ENCODE measurements at regions of chr3 and their contacts with region 1.

Region 1: GRCh38 chr3:108489771-108490170 is 20.6 kb downstream of the MYH15 start:
- DNase-seq: peak; percentile 39
- ATAC-seq: peak; percentile 80
- H3K4me3 ChIP-seq: no peak overlapping the region
- H3K27ac ChIP-seq: no peak overlapping the region
- H3K4me1 ChIP-seq: no peaks in the 10 kb centered on the region
- H3K27me3 ChIP-seq: peaks cover 0 to 3% of the 10 kb centered on the region in 2 experiments; a peak in 1 of 5 replicates
- CTCF ChIP-seq: peak; percentile 76
- EP300 ChIP-seq: no peak
- POLR2A ChIP-seq: no peak
- RAD21 ChIP-seq: 0 out of 2 replicates have a peak, but pooled peaks have one; percentile 39

Region 2: DNA sequence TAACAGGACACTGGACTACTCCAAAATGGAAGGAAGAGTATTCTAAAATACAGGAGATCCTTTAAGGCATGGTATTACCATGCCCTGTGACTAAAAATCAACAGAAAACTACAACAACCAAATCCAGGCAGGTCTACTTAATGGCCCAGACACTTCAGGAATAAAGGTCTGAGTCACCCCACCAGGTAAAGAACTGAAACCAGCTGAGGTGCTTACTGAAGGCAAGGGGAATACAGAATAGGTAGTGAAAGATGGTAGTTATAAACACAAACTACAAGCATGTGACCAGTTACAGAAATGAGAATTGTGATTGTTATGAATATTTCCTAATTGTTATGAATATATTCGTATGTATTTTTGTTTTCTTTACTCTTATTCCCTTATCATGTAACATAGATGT is 280.9 kb before region 1 on chr3:
- CTCF ChIA-PET with region 1: no interaction called
- POLR2A ChIA-PET with region 1: no interaction called
- in situ Hi-C with region 1: no loop called
- intact Hi-C with region 1: no loop called
- DNase-seq: no peak
- ATAC-seq: no peak
- H3K4me3 ChIP-seq: no peak overlapping the region
- H3K27ac ChIP-seq: no peak overlapping the region
- H3K4me1 ChIP-seq: no peaks in the 10 kb centered on the region
- H3K27me3 ChIP-seq: no peaks in the 10 kb centered on the region; a peak in 1 of 5 replicates
- CTCF ChIP-seq: no peak
- EP300 ChIP-seq: no peak
- POLR2A ChIP-seq: no peak
- RAD21 ChIP-seq: no peak

Region 3: GRCh38 chr3:108453565-108453964 is 36.2 kb before region 1 on chr3:
- CTCF ChIA-PET with region 1: no interaction called
- POLR2A ChIA-PET with region 1: no interaction called
- in situ Hi-C with region 1: no loop called
- intact Hi-C with region 1: no loop called
- DNase-seq: no peak
- ATAC-seq: no peak
- H3K4me3 ChIP-seq: no peak overlapping the region
- H3K27ac ChIP-seq: no peak overlapping the region
- H3K4me1 ChIP-seq: no peaks in the 10 kb centered on the region
- H3K27me3 ChIP-seq: no peaks in the 10 kb centered on the region
- CTCF ChIP-seq: no peak
- EP300 ChIP-seq: no peak
- POLR2A ChIP-seq: no peak
- RAD21 ChIP-seq: no peak

Region 4: DNA sequence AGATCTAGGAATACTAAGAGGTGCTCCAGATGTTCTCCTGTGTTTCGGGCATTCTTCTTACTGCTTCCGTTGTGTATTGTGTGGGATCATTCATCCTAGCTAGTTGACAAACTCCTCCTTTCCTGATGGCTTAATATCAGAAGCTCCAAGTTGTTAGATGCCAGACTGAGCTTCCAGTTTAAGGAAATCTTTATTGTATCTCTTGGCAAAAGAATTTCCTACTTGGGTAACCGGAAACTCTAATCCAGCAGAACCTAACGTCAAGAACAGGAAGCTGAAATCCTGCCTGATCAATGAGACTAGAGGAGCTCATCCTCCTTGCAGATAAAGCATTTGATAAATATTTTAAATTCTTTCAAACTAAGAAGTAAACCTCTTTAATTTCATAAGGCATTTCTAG is 48.3 kb after region 1 on chr3:
- CTCF ChIA-PET with region 1: no interaction called
- POLR2A ChIA-PET with region 1: no interaction called
- in situ Hi-C with region 1: no loop called
- intact Hi-C with region 1: no loop called
- DNase-seq: no peak
- ATAC-seq: no peak
- H3K4me3 ChIP-seq: no peak overlapping the region
- H3K27ac ChIP-seq: no peak overlapping the region
- H3K4me1 ChIP-seq: no peaks in the 10 kb centered on the region
- H3K27me3 ChIP-seq: no peaks in the 10 kb centered on the region; a peak in 1 of 5 replicates
- CTCF ChIP-seq: no peak
- EP300 ChIP-seq: no peak
- POLR2A ChIP-seq: no peak
- RAD21 ChIP-seq: no peak

Region 5: GRCh38 chr3:108552267-108553159 is 62.7 kb after region 1 on chr3:
- CTCF ChIA-PET with region 1: interaction called, 47 read pairs
- POLR2A ChIA-PET with region 1: no interaction called
- in situ Hi-C with region 1: loop called (anchors 5 kb)
- intact Hi-C with region 1: loop called (anchors 1 kb)
- DNase-seq: peak; percentile 35
- ATAC-seq: peak; percentile 44; the same call in 2 of the 3 replicates
- H3K4me3 ChIP-seq: no peak overlapping the region
- H3K27ac ChIP-seq: no peak overlapping the region
- H3K4me1 ChIP-seq: peaks cover 14% of the 10 kb centered on the region
- H3K27me3 ChIP-seq: no peaks in the 10 kb centered on the region
- CTCF ChIP-seq: peak; percentile 54
- EP300 ChIP-seq: no peak
- POLR2A ChIP-seq: no peak
- RAD21 ChIP-seq: no peak

Region 6: GRCh38 chr3:108662130-108662738 is 172.5 kb after region 1 on chr3:
- CTCF ChIA-PET with region 1: interaction called, 3 read pairs
- POLR2A ChIA-PET with region 1: no interaction called
- in situ Hi-C with region 1: no loop called
- intact Hi-C with region 1: loop called (anchors 2 kb)
- DNase-seq: peak; percentile 56
- ATAC-seq: peak; percentile 68
- H3K4me3 ChIP-seq: no peak overlapping the region
- H3K27ac ChIP-seq: no peak overlapping the region
- H3K4me1 ChIP-seq: no peaks in the 10 kb centered on the region
- H3K27me3 ChIP-seq: no peaks in the 10 kb centered on the region
- CTCF ChIP-seq: peak; percentile 72
- EP300 ChIP-seq: no peak
- POLR2A ChIP-seq: no peak
- RAD21 ChIP-seq: peak; percentile 54; the same call in 1 of the 2 replicates

Region 7: GRCh38 chr3:108879916-108880315 is 390.1 kb after region 1 on chr3:
- CTCF ChIA-PET with region 1: no interaction called
- POLR2A ChIA-PET with region 1: no interaction called
- in situ Hi-C with region 1: no loop called
- intact Hi-C with region 1: loop called (anchors 1 kb)
- DNase-seq: peak; percentile 19
- ATAC-seq: peak; percentile 92
- H3K4me3 ChIP-seq: no peak overlapping the region
- H3K27ac ChIP-seq: no peak overlapping the region
- H3K4me1 ChIP-seq: no peaks in the 10 kb centered on the region
- H3K27me3 ChIP-seq: no peaks in the 10 kb centered on the region
- CTCF ChIP-seq: peak; percentile 47
- EP300 ChIP-seq: no peak
- POLR2A ChIP-seq: no peak
- RAD21 ChIP-seq: 0 out of 2 replicates have a peak, but pooled peaks have one; percentile 12

Region 8: DNA sequence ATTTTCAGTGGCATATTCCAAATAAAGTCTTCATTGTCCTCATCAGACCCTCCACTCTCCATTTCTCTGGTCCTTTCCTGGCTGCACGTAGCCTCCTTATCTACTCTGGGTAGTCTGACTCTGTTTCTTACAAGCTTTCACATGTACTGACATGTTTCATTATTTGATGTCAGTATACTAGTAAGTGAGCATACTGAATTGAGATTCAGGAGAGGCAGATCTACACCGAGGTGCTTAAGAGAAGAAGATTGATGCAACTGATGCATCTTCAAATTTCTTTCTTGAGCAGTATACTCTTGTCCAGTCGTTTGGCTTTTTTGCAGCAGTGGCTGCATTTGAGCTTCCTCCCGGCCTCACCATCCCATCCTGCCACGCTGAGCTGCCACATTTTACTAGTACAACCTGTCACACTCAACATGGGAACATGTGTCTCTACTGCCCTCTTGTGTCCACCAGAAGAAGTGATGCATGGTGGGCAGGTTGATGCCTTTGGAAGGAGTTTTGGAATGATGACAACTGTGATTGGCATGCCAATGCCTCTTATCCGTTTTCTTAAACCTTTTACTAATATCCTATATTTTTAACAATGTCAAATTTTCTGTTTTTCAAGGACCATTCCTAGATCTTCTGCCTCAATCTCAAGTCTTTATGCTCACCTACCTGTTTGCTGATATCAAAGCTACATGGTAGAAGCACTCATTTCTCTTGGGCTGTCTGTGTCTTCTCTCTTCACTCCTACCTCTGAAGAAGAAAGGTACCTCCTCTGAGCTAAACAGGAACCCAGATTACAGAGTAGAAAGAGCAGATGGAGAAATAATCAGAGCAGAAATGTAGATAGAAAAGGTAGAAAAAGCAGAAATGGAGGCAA is 425.2 kb after region 1 on chr3:
- CTCF ChIA-PET with region 1: interaction called, 11 read pairs
- POLR2A ChIA-PET with region 1: no interaction called
- in situ Hi-C with region 1: loop called (anchors 10 kb)
- intact Hi-C with region 1: loop called (anchors 1 kb)
- DNase-seq: peak; percentile 61
- ATAC-seq: peak; percentile 96
- H3K4me3 ChIP-seq: no peak overlapping the region
- H3K27ac ChIP-seq: no peak overlapping the region
- H3K4me1 ChIP-seq: no peaks in the 10 kb centered on the region
- H3K27me3 ChIP-seq: no peaks in the 10 kb centered on the region
- CTCF ChIP-seq: peak; percentile 90
- EP300 ChIP-seq: no peak
- POLR2A ChIP-seq: no peak
- RAD21 ChIP-seq: peak; percentile 41; the same call in 1 of the 2 replicates

Region 9: DNA sequence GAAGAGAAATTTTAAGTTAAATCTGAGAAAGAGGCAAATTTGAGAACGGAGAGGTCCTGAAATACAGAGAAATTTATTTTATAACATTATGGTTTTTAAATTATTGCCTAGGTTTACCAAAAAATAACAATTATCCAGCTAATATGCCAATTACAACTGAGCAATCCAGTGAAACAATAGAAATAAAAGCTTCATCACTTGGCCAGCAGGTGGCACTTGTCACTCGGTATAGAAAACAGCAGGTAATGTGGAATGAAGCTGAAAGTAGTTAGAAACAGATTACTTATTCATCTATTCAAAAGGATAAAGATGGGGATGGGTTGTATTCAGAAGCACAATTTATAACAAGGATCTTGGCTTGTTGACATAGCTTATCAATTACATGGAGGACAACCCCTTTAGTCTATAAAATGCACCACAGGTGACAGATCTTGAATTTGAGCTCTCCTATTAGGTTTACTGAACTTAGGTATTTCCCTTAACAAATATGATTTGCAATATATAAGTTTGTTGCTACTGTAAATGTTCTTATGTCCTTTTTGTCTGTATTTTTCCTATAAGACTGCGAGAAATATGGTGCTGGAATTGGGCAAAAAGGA is 534.0 kb after region 1 on chr3:
- CTCF ChIA-PET with region 1: no interaction called
- POLR2A ChIA-PET with region 1: no interaction called
- in situ Hi-C with region 1: no loop called
- intact Hi-C with region 1: loop called (anchors 10 kb)
- DNase-seq: peak; percentile 25
- ATAC-seq: peak; percentile 61; the same call in 2 of the 3 replicates
- H3K4me3 ChIP-seq: no peak overlapping the region
- H3K27ac ChIP-seq: no peak overlapping the region
- H3K4me1 ChIP-seq: no peaks in the 10 kb centered on the region
- H3K27me3 ChIP-seq: no peaks in the 10 kb centered on the region
- CTCF ChIP-seq: peak; percentile 67
- EP300 ChIP-seq: no peak
- POLR2A ChIP-seq: no peak
- RAD21 ChIP-seq: no peak

Region 10: DNA sequence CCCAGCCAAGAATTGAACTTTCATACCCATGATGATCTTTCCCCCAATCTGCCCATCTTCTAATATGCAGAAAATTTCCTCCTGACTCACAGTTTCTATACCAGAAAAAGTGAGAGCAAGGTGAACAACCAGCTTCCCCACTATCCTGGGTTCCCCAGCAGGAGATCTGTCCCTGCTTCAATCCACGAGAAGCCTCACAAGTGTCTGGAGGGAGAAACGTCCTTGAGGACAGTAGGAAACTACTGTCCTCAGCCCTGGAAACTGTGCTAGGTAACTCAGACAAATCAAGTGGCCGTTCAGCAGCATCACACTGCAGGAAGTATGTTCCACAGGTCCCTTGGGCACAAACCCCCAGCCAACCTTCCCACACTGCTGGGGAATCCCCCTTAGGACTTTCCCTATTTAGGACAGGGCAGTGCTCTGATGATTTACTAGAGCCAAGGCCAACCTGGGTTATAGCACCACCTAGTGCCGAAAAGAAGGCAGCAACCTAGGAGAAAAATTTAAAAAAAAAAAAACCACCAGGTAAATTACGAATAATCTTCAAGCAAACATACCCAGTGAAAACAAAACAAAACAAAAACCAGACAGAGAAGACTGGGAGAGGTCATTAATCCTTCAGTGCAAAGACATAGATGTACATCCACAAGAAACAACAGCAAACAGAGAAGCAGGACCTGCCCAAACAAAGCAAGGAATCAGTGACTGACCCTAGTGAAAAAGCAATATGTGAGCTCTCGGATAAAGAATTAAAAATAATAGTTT is 592.2 kb after region 1 on chr3:
- CTCF ChIA-PET with region 1: interaction called, 3 read pairs
- POLR2A ChIA-PET with region 1: no interaction called
- in situ Hi-C with region 1: no loop called
- intact Hi-C with region 1: loop called (anchors 5 kb)
- DNase-seq: peak; percentile 31
- ATAC-seq: peak; percentile 91
- H3K4me3 ChIP-seq: no peak overlapping the region
- H3K27ac ChIP-seq: no peak overlapping the region
- H3K4me1 ChIP-seq: no peaks in the 10 kb centered on the region
- H3K27me3 ChIP-seq: no peaks in the 10 kb centered on the region
- CTCF ChIP-seq: peak; percentile 71
- EP300 ChIP-seq: no peak
- POLR2A ChIP-seq: no peak
- RAD21 ChIP-seq: no peak